ENCODE measurements at regions of chr12 and their contacts with region 1.

Region 1: GRCh38 chr12:66901138-66901932 is 222.5 kb upstream of the GRIP1 start:
- DNase-seq: peak in 1 of 9 donors; percentile 4
- ATAC-seq: peak; percentile 69
- H3K4me3 ChIP-seq: no peak overlapping the region
- H3K4me3 Mint-ChIP-seq: peak overlapping the region in 9 of 10 donors; percentile 14 to 78 (median 69)
- H3K27ac ChIP-seq: peak overlapping the region; percentile 44
- H3K27ac Mint-ChIP-seq: peak overlapping the region in 8 of 9 donors; percentile 34 to 84 (median 67)
- H3K4me1 ChIP-seq: peaks cover 0 to 20% of the 10 kb centered on the region in 2 donors
- H3K4me1 Mint-ChIP-seq: peaks cover 14 to 52% (median 47%) of the 10 kb centered on the region in 7 donors
- H3K27me3 ChIP-seq: no peaks in the 10 kb centered on the region
- H3K27me3 Mint-ChIP-seq: peaks cover 0 to 4% (median 0%) of the 10 kb centered on the region in 5 donors

Region 2: DNA sequence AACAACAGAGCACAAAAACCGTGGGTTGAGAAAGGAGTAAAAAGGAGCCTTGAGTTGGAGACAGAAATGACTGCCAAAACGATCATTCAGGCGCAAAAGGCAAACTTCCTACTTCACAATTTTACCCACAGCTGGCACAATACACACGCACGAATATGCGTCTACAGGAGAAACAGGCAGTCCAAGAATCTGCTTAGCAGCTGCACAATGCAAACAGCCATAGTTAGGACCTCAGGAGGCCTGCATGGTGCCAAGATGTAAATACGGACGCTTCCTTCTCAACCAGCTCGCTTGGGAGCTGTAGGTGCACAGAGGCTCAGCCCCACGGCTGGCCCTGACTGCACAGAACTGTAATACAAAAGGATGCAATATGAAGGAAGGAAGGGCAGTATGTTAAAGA is 117.7 kb after region 1 on chr12:
- CTCF ChIA-PET with region 1: no interaction called
- POLR2A ChIA-PET with region 1: no interaction called
- intact Hi-C with region 1: no loop called
- DNase-seq: no peak
- ATAC-seq: no peak
- H3K4me3 ChIP-seq: no peak overlapping the region
- H3K4me3 Mint-ChIP-seq: no peak overlapping the region
- H3K27ac ChIP-seq: no peak overlapping the region
- H3K27ac Mint-ChIP-seq: no peak overlapping the region
- H3K4me1 ChIP-seq: no peaks in the 10 kb centered on the region
- H3K4me1 Mint-ChIP-seq: peaks cover 0 to 1% (median 0%) of the 10 kb centered on the region in 7 donors
- H3K27me3 ChIP-seq: no peaks in the 10 kb centered on the region
- H3K27me3 Mint-ChIP-seq: peaks cover 0 to 7% (median 2%) of the 10 kb centered on the region in 5 donors

Region 3: GRCh38 chr12:67068761-67069450 is 167.6 kb after region 1 on chr12:
- CTCF ChIA-PET with region 1: no interaction called
- POLR2A ChIA-PET with region 1: no interaction called
- intact Hi-C with region 1: loop called in 1 of 2 experiments (anchors 5 kb)
- DNase-seq: peak in 8 of 9 donors; percentile 29 to 54 (median 42)
- ATAC-seq: peak; percentile 79
- H3K4me3 ChIP-seq: no peak overlapping the region
- H3K4me3 Mint-ChIP-seq: peak overlapping the region; percentile 85 to 96 (median 92)
- H3K27ac ChIP-seq: no peak overlapping the region
- H3K27ac Mint-ChIP-seq: peak overlapping the region in 6 of 9 donors; percentile 31 to 82 (median 79)
- H3K4me1 ChIP-seq: peaks cover 0 to 5% of the 10 kb centered on the region in 2 donors
- H3K4me1 Mint-ChIP-seq: peaks cover 9 to 27% (median 19%) of the 10 kb centered on the region in 7 donors
- H3K27me3 ChIP-seq: no peaks in the 10 kb centered on the region
- H3K27me3 Mint-ChIP-seq: peaks cover 0 to 64% (median 35%) of the 10 kb centered on the region in 5 donors

Region 4: DNA sequence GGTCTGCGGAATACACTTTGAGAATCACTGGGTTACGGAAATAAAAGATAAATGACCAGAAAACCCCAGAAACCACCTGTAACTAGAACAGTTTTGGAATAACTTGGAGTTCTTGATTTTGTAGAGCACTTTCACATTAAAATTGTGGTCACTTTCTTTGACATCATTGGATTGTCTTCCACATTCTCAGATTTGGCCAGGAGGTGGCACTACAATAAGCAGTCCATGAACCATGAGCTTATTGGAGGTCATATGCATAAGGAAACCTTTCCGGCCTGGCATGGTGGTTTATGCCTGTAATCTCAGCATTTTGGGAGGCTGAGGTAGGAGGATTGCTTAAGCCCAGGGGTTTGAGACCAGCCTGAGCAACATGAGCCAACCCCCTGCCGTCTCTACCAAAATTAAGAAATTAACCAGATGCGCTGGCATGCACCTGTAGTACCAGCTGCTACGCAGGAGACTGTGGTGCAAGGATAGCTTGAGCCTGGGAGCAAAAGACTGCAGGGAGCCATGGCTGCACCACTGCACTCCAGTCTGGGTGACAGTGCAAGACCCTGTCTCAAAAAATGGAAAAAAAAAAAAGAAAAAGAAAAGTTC is 260.1 kb after region 1 on chr12:
- CTCF ChIA-PET with region 1: no interaction called
- POLR2A ChIA-PET with region 1: no interaction called
- intact Hi-C with region 1: loop called in 1 of 2 experiments (anchors 1 kb)
- DNase-seq: peak in 7 of 9 donors; percentile 8 to 27 (median 21)
- ATAC-seq: no peak
- H3K4me3 ChIP-seq: no peak overlapping the region
- H3K4me3 Mint-ChIP-seq: no peak overlapping the region
- H3K27ac ChIP-seq: no peak overlapping the region
- H3K27ac Mint-ChIP-seq: no peak overlapping the region
- H3K4me1 ChIP-seq: no peaks in the 10 kb centered on the region
- H3K4me1 Mint-ChIP-seq: peaks cover 0 to 3% (median 0%) of the 10 kb centered on the region in 7 donors
- H3K27me3 ChIP-seq: no peaks in the 10 kb centered on the region
- H3K27me3 Mint-ChIP-seq: peaks cover 0 to 6% (median 4%) of the 10 kb centered on the region in 5 donors